Activated CD4-positive, alpha-beta T cell treated with anti-CD3 and anti-CD28 coated beads for 36 hours (primary cell): ENCODE measurements at regions of chr12 and their contacts with region 1.

Region 1: GRCh38 chr12:54279866-54280467 is at the start of gene CBX5:
- DNase-seq: peak; percentile 100
- ATAC-seq: peak; percentile 50
- H3K4me3 Mint-ChIP-seq: no peak within 1 kb of the TSS
- H3K27ac Mint-ChIP-seq: no peak within 1 kb of the TSS
- H3K4me1 Mint-ChIP-seq: peaks cover 52% of the 10 kb centered on the region
- H3K27me3 Mint-ChIP-seq: no peaks in the 10 kb centered on the region
- total RNA-seq, gene CBX5: 140 to 146 TPM

Region 2: DNA sequence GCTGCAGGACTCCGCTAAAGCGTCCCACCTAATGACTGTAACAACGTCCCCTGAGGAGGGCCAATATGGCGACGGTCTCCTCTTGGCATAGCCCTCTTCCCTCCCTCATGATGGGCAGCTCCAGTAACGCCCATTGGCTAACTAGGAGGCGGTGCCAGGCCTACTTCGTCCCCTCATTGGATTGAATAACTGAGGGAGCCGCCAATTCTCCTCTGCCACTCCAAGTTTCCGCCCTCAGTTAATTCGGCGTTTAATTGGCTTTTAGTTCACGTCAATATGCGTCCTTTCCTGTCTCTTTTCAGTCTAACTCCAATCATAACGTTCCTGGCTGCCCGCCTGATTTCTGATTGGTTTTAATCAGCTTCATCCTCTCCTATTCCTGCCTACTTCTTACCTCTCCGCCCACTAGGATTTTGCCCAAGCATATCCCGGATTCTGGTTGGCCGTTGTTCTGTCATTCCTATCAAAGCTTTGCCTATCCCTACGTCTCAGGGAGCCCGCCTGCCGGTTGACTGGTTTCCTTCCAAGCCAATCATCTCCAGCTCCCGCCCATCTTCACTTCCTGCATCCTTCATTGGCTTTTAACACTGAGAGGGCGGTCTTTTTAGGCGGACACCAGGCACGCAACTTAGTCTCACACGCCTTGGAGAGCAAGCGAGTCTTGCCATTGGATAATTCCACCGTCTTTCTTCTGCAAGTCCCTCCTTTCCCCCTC is 900.4 kb before region 1 on chr12:
- CTCF ChIA-PET with region 1: no interaction called
- POLR2A ChIA-PET with region 1: no interaction called
- intact Hi-C with region 1: loop called in 1 of 2 experiments (anchors 1 kb)
- DNase-seq: peak; percentile 96
- ATAC-seq: peak; percentile 82
- H3K4me3 Mint-ChIP-seq: no peak overlapping the region
- H3K27ac Mint-ChIP-seq: no peak overlapping the region
- H3K4me1 Mint-ChIP-seq: peaks cover 39% of the 10 kb centered on the region
- H3K27me3 Mint-ChIP-seq: no peaks in the 10 kb centered on the region

Region 3: DNA sequence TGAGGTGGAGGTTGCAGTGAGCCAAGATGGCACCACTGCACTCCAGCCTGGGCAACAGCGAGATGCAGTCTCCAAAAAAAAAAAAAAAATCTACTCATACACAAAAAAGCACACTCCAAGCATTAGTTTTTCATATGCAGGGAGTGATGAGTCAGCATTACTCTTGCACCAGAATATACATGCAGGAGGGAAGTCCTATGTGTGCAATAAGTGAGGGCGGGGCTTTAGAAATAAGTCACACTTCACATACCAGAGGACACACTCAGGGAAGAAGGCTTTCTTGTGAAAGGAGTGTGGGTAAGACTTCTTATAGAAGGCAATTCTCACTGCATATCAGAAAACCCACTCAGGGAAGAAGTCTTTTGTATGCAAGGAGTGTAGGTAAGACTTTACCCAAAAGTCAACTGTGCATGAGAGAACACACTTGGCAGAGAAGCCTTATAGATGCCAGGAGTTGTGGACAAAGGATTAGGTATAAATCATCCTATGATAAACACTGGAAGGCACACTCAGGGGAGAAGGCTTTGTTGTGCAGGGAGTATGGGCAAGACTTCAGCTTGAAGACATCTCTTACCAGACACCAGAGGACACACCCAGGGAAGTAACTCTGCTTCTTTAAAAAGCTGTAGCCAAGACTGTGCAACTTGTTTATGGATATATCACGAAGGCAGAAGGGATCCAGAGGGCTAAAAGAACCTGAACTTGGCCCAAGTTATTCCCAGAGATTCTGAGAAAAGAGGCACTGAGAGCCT is 704.3 kb before region 1 on chr12:
- CTCF ChIA-PET with region 1: no interaction called
- POLR2A ChIA-PET with region 1: no interaction called
- intact Hi-C with region 1: no loop called
- DNase-seq: peak; percentile 23
- ATAC-seq: peak; percentile 78
- H3K4me3 Mint-ChIP-seq: no peak overlapping the region
- H3K27ac Mint-ChIP-seq: no peak overlapping the region
- H3K4me1 Mint-ChIP-seq: peaks cover 45% of the 10 kb centered on the region
- H3K27me3 Mint-ChIP-seq: no peaks in the 10 kb centered on the region

Region 4: DNA sequence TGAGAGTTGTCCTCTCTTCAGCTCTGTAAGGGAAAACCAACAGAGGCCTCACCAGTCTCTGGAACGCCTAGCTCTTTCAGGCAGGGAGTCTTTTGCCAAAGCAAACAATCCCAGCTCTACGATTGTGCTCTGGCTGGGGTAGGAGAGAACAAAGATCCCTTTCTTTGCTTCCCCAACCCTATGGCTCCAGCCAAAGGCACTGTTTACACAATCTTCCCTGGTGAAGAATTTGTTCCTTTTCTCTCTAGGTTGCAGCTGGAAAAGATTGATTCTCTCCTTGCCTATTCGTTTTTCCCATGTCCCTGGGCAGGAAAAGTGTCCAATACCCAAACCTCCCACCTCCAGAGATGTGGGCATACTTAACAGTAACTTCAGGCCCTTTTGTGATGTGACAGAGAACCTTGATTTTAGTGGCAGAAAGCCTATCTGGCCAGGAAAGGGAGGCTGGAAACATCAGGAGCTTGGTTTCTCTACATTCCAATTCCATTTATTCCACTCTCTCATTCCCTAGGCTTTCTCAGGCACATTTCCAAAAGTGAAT is 620.9 kb before region 1 on chr12:
- CTCF ChIA-PET with region 1: no interaction called
- POLR2A ChIA-PET with region 1: interaction called, 13 read pairs
- intact Hi-C with region 1: no loop called
- DNase-seq: no peak
- ATAC-seq: no peak
- H3K4me3 Mint-ChIP-seq: no peak overlapping the region
- H3K27ac Mint-ChIP-seq: no peak overlapping the region
- H3K4me1 Mint-ChIP-seq: no peaks in the 10 kb centered on the region
- H3K27me3 Mint-ChIP-seq: no peaks in the 10 kb centered on the region

Region 5: GRCh38 chr12:54147186-54147585 is 132.8 kb before region 1 on chr12:
- CTCF ChIA-PET with region 1: no interaction called
- POLR2A ChIA-PET with region 1: no interaction called
- intact Hi-C with region 1: no loop called
- DNase-seq: peak; percentile 17
- ATAC-seq: no peak
- H3K4me3 Mint-ChIP-seq: no peak overlapping the region
- H3K27ac Mint-ChIP-seq: no peak overlapping the region
- H3K4me1 Mint-ChIP-seq: no peaks in the 10 kb centered on the region
- H3K27me3 Mint-ChIP-seq: peaks cover 26% of the 10 kb centered on the region

Region 6: GRCh38 chr12:54214553-54215406 is 65.2 kb before region 1 on chr12:
- CTCF ChIA-PET with region 1: interaction called, 8 read pairs
- POLR2A ChIA-PET with region 1: interaction called, 4 read pairs
- intact Hi-C with region 1: loop called (anchors 2 to 5 kb)
- DNase-seq: peak; percentile 97
- ATAC-seq: peak; percentile 92
- H3K4me3 Mint-ChIP-seq: peak overlapping the region; percentile 63
- H3K27ac Mint-ChIP-seq: no peak overlapping the region
- H3K4me1 Mint-ChIP-seq: peaks cover 26% of the 10 kb centered on the region
- H3K27me3 Mint-ChIP-seq: peaks cover 15% of the 10 kb centered on the region

Region 7: GRCh38 chr12:54324617-54325441 is 44.9 kb after region 1 on chr12 and contains the start of gene COPZ1:
- CTCF ChIA-PET with region 1: interaction called, 16 read pairs
- POLR2A ChIA-PET with region 1: interaction called, 17 read pairs
- intact Hi-C with region 1: loop called (anchors 1 kb)
- DNase-seq: peak; percentile 96
- ATAC-seq: peak; percentile 99
- H3K4me3 Mint-ChIP-seq: peak within 1 kb of the TSS; percentile 96
- H3K27ac Mint-ChIP-seq: peak within 1 kb of the TSS; percentile 92
- H3K4me1 Mint-ChIP-seq: peaks cover 36% of the 10 kb centered on the region
- H3K27me3 Mint-ChIP-seq: no peaks in the 10 kb centered on the region
- total RNA-seq, gene COPZ1: 95.2 to 98.7 TPM

Region 8: GRCh38 chr12:54935235-54935951 is 655.4 kb after region 1 on chr12:
- CTCF ChIA-PET with region 1: no interaction called
- POLR2A ChIA-PET with region 1: no interaction called
- intact Hi-C with region 1: loop called in 1 of 2 experiments (anchors 5 kb)
- DNase-seq: peak; percentile 62
- ATAC-seq: peak; percentile 92
- H3K4me3 Mint-ChIP-seq: peak overlapping the region; percentile 45
- H3K27ac Mint-ChIP-seq: peak overlapping the region; percentile 96
- H3K4me1 Mint-ChIP-seq: peaks cover 69% of the 10 kb centered on the region
- H3K27me3 Mint-ChIP-seq: no peaks in the 10 kb centered on the region